A549 (cell line): ENCODE measurements at regions of chr18 and their contacts with region 1.

Region 1: DNA sequence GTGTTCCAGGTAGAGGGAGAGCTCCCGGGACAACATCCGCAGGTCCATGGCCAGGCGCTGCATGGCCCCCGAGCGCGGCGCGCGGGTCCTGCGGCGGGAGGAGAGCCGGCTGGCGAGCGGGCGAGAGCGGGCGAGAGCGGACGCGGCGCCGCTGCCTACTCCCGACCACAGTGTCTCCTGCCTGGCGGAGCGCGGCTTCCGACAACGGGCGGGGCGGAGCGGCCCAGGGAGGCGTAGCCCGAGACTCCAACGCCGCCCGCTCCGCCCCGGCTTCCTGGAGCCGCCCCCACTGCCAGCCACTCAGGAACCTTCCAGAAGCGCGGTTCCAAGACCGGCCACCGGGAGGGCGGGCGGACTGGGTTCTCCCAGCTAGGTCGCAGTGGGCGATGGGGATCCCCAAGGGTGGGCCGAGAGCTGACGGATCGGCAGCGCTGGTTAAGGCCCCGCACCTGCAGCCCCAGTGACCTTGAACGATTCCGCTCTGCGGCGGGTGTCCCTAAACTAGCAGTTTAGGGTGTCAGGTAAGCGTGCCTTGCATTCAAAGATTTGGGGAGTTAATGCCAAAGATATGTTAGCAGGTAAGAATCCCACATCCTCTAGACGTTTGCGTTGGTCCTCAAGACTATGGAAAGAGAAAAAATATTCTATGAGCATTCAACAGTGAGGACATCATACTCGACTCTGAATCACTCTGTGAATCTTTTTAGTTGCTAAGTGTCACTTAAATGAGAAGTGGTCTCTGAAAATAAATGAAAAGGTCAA is at the start of gene ABHD3:
- DNase-seq: peak; percentile 61 to 85
- ATAC-seq: peak; percentile 97 to 100
- H3K4me3 ChIP-seq: peak within 1 kb of the TSS; percentile 91
- H3K27ac ChIP-seq: peak within 1 kb of the TSS; percentile 88 to 93
- H3K4me1 ChIP-seq: peaks cover 11% of the 10 kb centered on the region; the same call in 2 of the 3 replicates
- CTCF ChIP-seq: no peak
- EP300 ChIP-seq: no peak
- POLR2A ChIP-seq: peak; percentile 91
- RAD21 ChIP-seq: 0 out of 5 replicates have a peak, but pooled peaks of 1 of the 2 experiments have one; percentile 18
- polyA plus RNA-seq, gene ABHD3: 24.4 and 24.7 TPM in 2 replicates

Region 2: GRCh38 chr18:21600526-21601410 is 104.0 kb before region 1 on chr18 and contains the start of gene ESCO1:
- CTCF ChIA-PET with region 1: interaction called, 6 read pairs
- POLR2A ChIA-PET with region 1: interaction called, 20 read pairs
- DNase-seq: peak; percentile 81 to 99
- ATAC-seq: peak; percentile 93 to 94
- H3K4me3 ChIP-seq: peak within 1 kb of the TSS; percentile 77
- H3K27ac ChIP-seq: peak within 1 kb of the TSS; percentile 90 to 98
- H3K4me1 ChIP-seq: peaks cover 11% of the 10 kb centered on the region; the same call in 1 of the 3 replicates
- CTCF ChIP-seq: peak; percentile 88
- EP300 ChIP-seq: no peak
- POLR2A ChIP-seq: peak; percentile 86
- RAD21 ChIP-seq: peak; percentile 30 to 41; a peak in 3 of 5 replicates
- polyA plus RNA-seq, gene ESCO1: 9.1 and 13.2 TPM in 2 replicates

Region 3: DNA sequence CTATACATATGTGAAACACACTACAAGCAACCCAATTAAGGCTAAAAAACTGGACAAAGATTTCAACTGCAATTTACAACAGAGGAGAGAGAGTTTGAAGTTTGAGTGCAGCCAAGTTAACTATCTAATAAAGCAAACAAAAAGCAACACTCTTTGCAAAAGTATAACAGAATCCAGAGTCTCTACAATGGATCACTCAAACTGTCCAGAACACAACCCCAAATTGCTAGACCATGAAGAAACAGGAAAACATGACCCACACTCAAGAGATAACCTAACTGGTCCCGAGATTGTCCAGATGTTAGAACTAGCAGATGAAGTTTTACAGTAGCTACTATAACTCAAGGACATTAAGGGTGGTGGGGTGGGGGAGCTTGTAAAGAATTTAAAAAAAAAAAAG is 15.0 kb before region 1 on chr18:
- CTCF ChIA-PET with region 1: interaction called, 3 read pairs
- POLR2A ChIA-PET with region 1: interaction called, 12 read pairs
- DNase-seq: no peak
- ATAC-seq: no peak
- H3K4me3 ChIP-seq: no peak overlapping the region
- H3K27ac ChIP-seq: no peak overlapping the region
- H3K4me1 ChIP-seq: peaks cover 6% of the 10 kb centered on the region; the same call in 1 of the 3 replicates
- CTCF ChIP-seq: no peak
- EP300 ChIP-seq: no peak
- POLR2A ChIP-seq: no peak
- RAD21 ChIP-seq: no peak

Region 4: DNA sequence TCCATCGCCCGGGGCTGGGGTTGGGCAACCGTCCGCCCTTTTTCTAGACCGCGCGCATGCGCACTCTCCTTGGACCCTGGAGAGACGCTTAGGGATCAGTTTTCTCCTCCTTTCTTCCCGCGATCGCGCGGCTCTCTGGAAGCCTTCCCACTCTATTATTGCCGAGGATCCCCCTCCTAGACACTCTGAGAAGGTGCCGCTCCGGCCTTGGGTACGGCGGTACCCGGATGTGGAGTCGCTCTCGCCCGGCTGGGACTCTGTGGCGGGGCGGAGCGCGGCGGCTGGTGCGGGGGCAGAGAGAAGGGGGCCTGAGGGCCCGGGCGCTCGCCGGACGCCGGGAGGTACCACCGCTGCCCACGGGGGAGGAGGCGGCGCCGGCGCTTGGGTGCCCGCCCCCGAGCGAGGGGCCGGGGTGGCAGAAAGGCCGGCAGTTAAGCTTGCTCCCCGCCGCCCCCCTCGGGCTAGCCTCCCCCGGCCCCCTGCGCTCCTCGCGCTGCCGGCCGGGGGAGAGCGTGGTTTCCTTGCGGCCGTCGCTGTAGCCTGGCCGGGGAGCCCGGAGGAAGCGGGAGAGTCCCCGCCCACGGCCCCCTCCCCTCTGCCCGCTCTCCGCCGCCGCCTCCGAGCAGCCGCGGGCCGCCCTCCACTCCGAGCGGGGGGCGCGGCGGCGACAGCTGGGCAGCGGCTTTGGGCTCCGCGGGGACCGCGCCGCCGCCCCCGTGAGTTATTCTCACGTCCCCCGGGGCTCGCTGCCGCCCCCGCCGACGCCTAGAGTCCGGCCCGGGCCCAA is 36.1 kb after region 1 on chr18 and contains the start of gene MIB1:
- CTCF ChIA-PET with region 1: interaction called, 4 read pairs
- POLR2A ChIA-PET with region 1: interaction called, 17 read pairs
- DNase-seq: peak in 1 of 2 experiments; percentile 18
- ATAC-seq: peak; percentile 91
- H3K4me3 ChIP-seq: peak within 1 kb of the TSS; percentile 92
- H3K27ac ChIP-seq: peak within 1 kb of the TSS; percentile 94 to 100
- H3K4me1 ChIP-seq: peaks cover 8% of the 10 kb centered on the region; the same call in 2 of the 3 replicates
- CTCF ChIP-seq: no peak
- EP300 ChIP-seq: no peak
- POLR2A ChIP-seq: peak; percentile 47
- RAD21 ChIP-seq: no peak
- polyA plus RNA-seq, gene MIB1: 20.3 and 22.2 TPM in 2 replicates

Region 5: DNA sequence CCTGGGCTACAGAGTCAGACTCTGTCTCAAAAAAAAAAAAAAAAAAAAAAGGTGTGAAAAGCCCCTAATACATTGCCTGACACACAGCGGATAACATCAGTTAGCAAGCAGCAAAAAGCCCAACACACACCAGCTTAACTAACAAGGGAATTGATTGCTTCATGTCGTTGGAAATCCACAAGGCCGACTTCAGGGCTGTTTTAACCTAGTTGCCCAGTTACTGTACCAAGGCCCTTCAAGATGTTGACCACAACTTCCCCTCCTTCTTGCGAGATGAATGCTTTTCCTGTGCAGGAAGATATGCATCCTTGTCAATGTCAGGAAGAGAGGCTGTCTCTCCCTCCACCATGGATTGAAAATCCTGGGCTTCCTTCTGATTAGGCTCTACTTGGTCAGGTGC is 238.7 kb after region 1 on chr18:
- CTCF ChIA-PET with region 1: no interaction called
- POLR2A ChIA-PET with region 1: no interaction called
- DNase-seq: no peak
- ATAC-seq: no peak
- H3K4me3 ChIP-seq: no peak overlapping the region
- H3K27ac ChIP-seq: no peak overlapping the region
- H3K4me1 ChIP-seq: no peaks in the 10 kb centered on the region
- CTCF ChIP-seq: no peak
- EP300 ChIP-seq: no peak
- POLR2A ChIP-seq: no peak
- RAD21 ChIP-seq: no peak

Region 6: DNA sequence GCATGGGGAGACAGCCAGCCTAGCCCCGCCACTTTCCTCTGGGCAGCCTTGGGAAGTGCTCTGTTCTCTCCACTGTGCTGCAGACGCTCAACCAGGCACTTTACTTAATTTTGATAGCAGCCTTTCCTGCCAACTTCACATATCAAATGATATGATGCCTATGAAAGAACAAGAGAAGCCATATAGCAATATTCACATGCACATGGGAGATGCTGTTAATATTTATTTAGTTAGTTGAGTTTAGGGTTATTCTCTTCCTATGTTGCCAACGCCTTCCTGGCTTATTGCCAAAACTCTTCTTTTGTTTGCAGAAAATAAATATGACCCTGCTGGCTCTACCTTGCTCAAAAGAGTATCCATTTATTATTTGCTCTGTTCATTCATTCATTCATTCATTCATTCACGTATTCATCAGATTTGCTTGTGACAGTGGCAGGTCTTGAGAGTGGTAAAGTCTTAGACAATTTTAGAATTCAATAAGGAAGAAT is 563.9 kb after region 1 on chr18:
- CTCF ChIA-PET with region 1: no interaction called
- POLR2A ChIA-PET with region 1: no interaction called
- DNase-seq: no peak
- ATAC-seq: no peak
- H3K4me3 ChIP-seq: no peak overlapping the region
- H3K27ac ChIP-seq: no peak overlapping the region
- H3K4me1 ChIP-seq: no peaks in the 10 kb centered on the region
- CTCF ChIP-seq: no peak
- EP300 ChIP-seq: no peak
- POLR2A ChIP-seq: no peak
- RAD21 ChIP-seq: no peak